ENCODE measurements at regions of chr7 and their contacts with region 1.

Region 1: DNA sequence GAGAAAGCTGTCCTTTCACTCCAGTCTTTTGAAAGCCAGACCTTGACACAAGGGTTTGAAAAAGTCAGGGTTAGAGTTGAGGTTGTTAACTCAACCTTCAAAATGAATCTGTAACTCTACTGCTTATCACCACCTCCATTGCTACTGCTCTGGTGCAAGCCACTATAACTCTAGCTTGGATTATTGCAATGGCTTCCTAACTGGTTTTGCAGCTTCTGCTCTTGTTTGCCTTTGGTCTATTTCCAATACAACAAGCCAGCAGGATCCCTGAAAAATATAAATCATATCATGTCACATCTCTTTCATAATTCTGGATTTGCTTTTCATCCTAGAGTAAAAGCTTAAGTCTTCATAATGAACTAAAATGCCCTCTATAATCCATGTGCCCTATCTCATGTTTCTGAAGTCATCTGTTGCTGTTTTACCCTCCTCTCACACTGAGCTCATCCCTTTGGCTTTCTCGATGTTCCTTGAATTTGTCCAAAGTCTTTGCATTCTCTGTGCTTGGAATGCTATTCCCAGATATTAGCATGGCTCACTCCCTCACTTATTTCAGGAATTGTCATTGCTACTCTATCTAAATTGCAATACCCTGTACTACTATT is 10.9 kb downstream of the TAS2R60 start:
- DNase-seq: no peak
- ATAC-seq: no peak
- H3K4me3 ChIP-seq: no peak overlapping the region
- H3K27ac ChIP-seq: no peak overlapping the region
- H3K4me1 ChIP-seq: no peaks in the 10 kb centered on the region
- H3K27me3 ChIP-seq: peaks cover 4 to 6% of the 10 kb centered on the region in 2 experiments; a peak in 3 of 5 replicates
- CTCF ChIP-seq: no peak
- EP300 ChIP-seq: no peak
- POLR2A ChIP-seq: no peak
- RAD21 ChIP-seq: no peak

Region 2: GRCh38 chr7:143408686-143409561 is 45.3 kb before region 1 on chr7 and contains the start of gene EPHA1:
- CTCF ChIA-PET with region 1: no interaction called
- POLR2A ChIA-PET with region 1: no interaction called
- in situ Hi-C with region 1: no loop called
- intact Hi-C with region 1: no loop called
- DNase-seq: peak; percentile 48 to 91 (median 75)
- ATAC-seq: peak; percentile 44
- H3K4me3 ChIP-seq: no peak within 1 kb of the TSS
- H3K27ac ChIP-seq: no peak within 1 kb of the TSS
- H3K4me1 ChIP-seq: peaks cover 2 to 7% of the 10 kb centered on the region in 2 experiments; a peak in 4 of 5 replicates
- H3K27me3 ChIP-seq: peaks cover 39 to 49% of the 10 kb centered on the region in 2 experiments; a peak in 4 of 5 replicates
- CTCF ChIP-seq: peak; percentile 37 to 50 (median 48); a peak in 5 of 6 replicates
- EP300 ChIP-seq: no peak
- POLR2A ChIP-seq: no peak
- RAD21 ChIP-seq: 0 out of 4 replicates have a peak, but pooled peaks of 1 of the 2 experiments have one; percentile 14
- polyA plus RNA-seq, gene EPHA1: not detected

Region 3: DNA sequence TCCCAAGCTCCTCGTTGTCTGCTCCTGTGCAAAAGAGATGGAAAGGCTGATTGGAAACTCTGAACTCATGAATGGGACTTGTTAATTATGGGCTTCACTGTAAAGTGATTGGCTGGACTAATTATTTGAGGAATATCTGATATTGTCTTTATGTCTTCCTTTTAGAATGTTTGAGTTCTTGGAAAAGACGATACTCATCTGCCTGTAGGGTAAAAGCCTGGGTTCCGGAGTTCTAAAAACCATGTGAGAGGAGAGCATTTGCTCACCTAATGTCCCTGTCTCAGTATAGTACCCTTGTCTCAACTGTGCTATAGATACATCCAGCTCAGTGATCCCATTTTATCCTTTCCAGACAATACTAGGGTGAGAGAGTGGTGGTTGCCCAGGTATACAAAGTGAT is 22.0 kb before region 1 on chr7:
- CTCF ChIA-PET with region 1: no interaction called
- POLR2A ChIA-PET with region 1: no interaction called
- in situ Hi-C with region 1: no loop called
- intact Hi-C with region 1: loop called (anchors 2 kb)
- DNase-seq: no peak
- ATAC-seq: no peak
- H3K4me3 ChIP-seq: no peak overlapping the region
- H3K27ac ChIP-seq: no peak overlapping the region
- H3K4me1 ChIP-seq: peaks cover 1 to 9% of the 10 kb centered on the region in 2 experiments; a peak in 3 of 5 replicates
- H3K27me3 ChIP-seq: no peaks in the 10 kb centered on the region
- CTCF ChIP-seq: no peak
- EP300 ChIP-seq: no peak
- POLR2A ChIP-seq: no peak
- RAD21 ChIP-seq: no peak

Region 4: DNA sequence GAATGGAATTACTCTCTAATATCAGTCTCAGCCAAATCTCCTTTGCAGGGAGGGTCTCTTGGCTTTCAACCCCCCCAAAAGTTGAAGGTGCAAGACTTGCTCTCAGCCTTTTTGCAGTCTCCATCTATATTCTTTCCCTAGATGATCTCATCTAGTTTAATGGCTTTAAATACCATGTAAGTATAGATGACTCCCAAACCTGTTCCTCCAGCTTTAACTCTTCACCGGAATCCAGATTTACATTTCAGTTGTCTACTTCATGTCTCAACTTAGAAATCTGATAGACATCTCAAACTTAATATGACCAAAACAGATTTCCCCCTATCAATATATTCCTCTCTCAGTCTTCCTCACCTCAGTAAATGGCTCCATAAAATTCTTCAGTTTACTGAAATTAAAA is 13.5 kb after region 1 on chr7:
- CTCF ChIA-PET with region 1: no interaction called
- POLR2A ChIA-PET with region 1: no interaction called
- in situ Hi-C with region 1: no loop called
- intact Hi-C with region 1: no loop called
- DNase-seq: no peak
- ATAC-seq: no peak
- H3K4me3 ChIP-seq: no peak overlapping the region
- H3K27ac ChIP-seq: no peak overlapping the region
- H3K4me1 ChIP-seq: no peaks in the 10 kb centered on the region
- H3K27me3 ChIP-seq: peaks cover 4 to 6% of the 10 kb centered on the region in 2 experiments; a peak in 4 of 5 replicates
- CTCF ChIP-seq: no peak
- EP300 ChIP-seq: no peak
- POLR2A ChIP-seq: no peak
- RAD21 ChIP-seq: no peak